ENCODE measurements at regions of chr14 and their contacts with region 1.

Region 1: GRCh38 chr14:95157327-95158189 is at the start of gene DICER1:
- DNase-seq: peak; percentile 94
- H3K4me3 Mint-ChIP-seq: peak within 1 kb of the TSS; percentile 92
- H3K27ac Mint-ChIP-seq: peak within 1 kb of the TSS; percentile 96
- H3K4me1 Mint-ChIP-seq: peaks cover 34% of the 10 kb centered on the region
- H3K27me3 Mint-ChIP-seq: no peaks in the 10 kb centered on the region
- total RNA-seq, gene DICER1: 38.1 to 42.3 TPM

Region 2: DNA sequence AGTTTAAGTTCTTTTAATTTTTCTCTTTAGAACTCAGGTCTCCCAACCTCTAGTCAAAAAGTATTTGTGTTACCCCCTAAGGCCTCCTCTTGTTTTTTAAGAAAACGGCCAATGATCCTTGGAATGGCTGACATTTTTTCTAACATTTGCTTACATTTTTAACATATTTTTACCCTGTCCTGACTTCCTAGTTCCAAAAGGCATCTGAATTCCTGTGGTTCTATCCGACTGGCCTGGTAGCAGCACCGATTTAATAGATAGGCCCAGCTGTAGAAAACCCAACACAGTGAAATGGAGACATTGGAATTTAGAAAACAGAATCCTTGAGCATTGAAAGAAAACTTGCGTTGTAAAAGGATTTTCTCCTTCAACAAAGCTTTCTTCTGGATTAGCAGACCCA is 252.9 kb before region 1 on chr14:
- CTCF ChIA-PET with region 1: no interaction called
- intact Hi-C with region 1: no loop called
- DNase-seq: no peak
- H3K4me3 Mint-ChIP-seq: no peak overlapping the region
- H3K27ac Mint-ChIP-seq: no peak overlapping the region
- H3K4me1 Mint-ChIP-seq: no peaks in the 10 kb centered on the region
- H3K27me3 Mint-ChIP-seq: peaks cover 12% of the 10 kb centered on the region

Region 3: GRCh38 chr14:95123891-95124579 is 33.5 kb before region 1 on chr14:
- CTCF ChIA-PET with region 1: no interaction called
- intact Hi-C with region 1: loop called (anchors 5 kb)
- DNase-seq: no peak
- H3K4me3 Mint-ChIP-seq: no peak overlapping the region
- H3K27ac Mint-ChIP-seq: no peak overlapping the region
- H3K4me1 Mint-ChIP-seq: peaks cover 15% of the 10 kb centered on the region
- H3K27me3 Mint-ChIP-seq: no peaks in the 10 kb centered on the region

Region 4: GRCh38 chr14:95265106-95266094 is 107.8 kb after region 1 on chr14:
- CTCF ChIA-PET with region 1: no interaction called
- intact Hi-C with region 1: loop called (anchors 2 kb)
- DNase-seq: peak; percentile 79
- H3K4me3 Mint-ChIP-seq: no peak overlapping the region
- H3K27ac Mint-ChIP-seq: peak overlapping the region; percentile 56
- H3K4me1 Mint-ChIP-seq: peaks cover 36% of the 10 kb centered on the region
- H3K27me3 Mint-ChIP-seq: no peaks in the 10 kb centered on the region

Region 5: DNA sequence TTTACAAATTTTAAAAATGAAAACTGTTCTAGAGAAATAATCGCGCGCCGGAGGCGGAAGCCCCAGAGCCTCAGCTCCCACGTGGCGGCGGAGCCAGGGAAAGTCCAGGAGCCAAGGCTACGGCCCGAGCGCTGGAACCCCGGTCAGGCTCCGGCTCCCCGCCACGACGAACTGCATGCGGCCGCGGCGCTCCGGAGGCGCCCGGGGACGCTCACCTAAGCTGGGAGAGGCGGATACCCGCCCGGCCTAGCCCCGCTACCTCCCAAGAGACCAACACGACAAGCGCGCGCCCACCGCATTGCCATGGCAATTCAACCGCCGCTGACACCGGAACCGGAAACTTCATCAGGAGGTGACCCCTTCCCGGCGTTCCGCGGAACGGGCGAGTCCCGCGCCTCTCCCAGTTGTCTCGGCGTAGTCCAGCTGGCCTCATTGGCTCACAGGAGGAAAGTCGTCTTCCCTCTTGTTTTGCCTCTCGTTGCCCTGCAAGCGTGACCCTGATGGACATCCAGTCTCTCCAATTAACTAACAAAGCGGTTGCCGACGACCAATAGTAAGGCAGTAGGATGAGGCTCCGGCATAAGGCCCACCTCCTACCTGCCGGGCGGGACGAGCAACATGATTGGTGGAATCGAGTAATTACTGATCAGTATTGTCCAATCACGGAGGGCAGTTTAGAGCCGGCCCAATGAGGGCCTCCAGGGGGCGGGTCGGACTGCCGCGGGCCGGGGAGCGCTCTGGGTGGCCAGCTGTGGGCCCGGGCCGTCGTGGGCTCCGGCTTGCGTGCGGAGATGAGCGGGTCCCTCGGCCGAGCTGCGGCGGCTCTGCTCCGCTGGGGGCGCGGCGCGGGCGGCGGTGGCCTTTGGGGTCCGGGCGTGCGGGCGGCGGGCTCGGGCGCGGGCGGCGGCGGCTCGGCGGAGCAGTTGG is 377.0 kb after region 1 on chr14 and contains the start of gene GLRX5:
- CTCF ChIA-PET with region 1: no interaction called
- intact Hi-C with region 1: loop called (anchors 1 kb)
- DNase-seq: peak; percentile 99
- H3K4me3 Mint-ChIP-seq: peak within 1 kb of the TSS; percentile 92
- H3K27ac Mint-ChIP-seq: peak within 1 kb of the TSS; percentile 82
- H3K4me1 Mint-ChIP-seq: peaks cover 61% of the 10 kb centered on the region
- H3K27me3 Mint-ChIP-seq: no peaks in the 10 kb centered on the region
- total RNA-seq, gene GLRX5: 34.2 to 34.6 TPM

Region 6: DNA sequence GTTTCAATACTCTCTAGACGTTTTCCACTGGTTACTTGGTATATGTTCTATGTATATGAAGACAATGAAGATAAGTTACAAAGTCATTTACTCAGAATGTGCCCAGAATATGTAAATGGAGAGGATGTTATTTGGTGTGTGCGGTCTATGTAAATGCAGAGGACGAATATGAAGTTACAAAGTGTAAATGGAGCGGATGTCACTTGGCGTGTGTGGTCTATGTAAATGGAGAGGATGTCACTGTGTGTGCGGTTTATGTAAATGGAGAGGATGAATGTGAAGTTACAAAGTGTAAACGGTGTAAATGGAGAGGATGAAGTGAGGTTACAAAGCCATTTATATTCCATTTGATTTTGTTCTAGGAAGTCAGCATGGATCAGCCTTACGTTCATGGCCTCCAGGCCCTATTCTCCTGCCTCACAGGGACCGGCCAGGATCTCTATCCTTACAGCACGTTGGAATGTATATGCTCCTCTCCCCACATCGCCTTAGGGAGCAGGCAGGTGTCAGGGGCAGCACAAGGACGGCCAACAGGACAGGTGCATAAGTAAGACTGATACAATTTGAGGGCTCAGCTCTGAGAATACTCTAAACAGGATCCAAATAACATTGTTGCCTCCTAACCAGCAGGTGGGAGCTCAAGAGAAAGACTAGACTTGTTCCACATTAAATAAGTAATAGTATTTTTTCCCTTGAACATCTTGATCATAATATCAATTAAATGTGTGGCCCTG is 419.7 kb after region 1 on chr14:
- CTCF ChIA-PET with region 1: no interaction called
- intact Hi-C with region 1: no loop called
- DNase-seq: no peak
- H3K4me3 Mint-ChIP-seq: no peak overlapping the region
- H3K27ac Mint-ChIP-seq: no peak overlapping the region
- H3K4me1 Mint-ChIP-seq: no peaks in the 10 kb centered on the region
- H3K27me3 Mint-ChIP-seq: peaks cover 5% of the 10 kb centered on the region